IMR-90 (cell line): ENCODE measurements at regions of chr6 and their contacts with region 1.

Region 1: GRCh38 chr6:27479319-27480182 is 6.6 kb upstream of the ZNF184 start:
- DNase-seq: peak; percentile 96
- ATAC-seq: peak; percentile 78
- H3K4me3 ChIP-seq: peak overlapping the region; percentile 54
- H3K27ac ChIP-seq: peak overlapping the region; percentile 85
- H3K4me1 ChIP-seq: no peaks in the 10 kb centered on the region
- H3K27me3 ChIP-seq: no peaks in the 10 kb centered on the region
- CTCF ChIP-seq: no peak
- POLR2A ChIP-seq: 0 out of 2 replicates have a peak, but pooled peaks have one; percentile 49
- RAD21 ChIP-seq: no peak

Region 2: DNA sequence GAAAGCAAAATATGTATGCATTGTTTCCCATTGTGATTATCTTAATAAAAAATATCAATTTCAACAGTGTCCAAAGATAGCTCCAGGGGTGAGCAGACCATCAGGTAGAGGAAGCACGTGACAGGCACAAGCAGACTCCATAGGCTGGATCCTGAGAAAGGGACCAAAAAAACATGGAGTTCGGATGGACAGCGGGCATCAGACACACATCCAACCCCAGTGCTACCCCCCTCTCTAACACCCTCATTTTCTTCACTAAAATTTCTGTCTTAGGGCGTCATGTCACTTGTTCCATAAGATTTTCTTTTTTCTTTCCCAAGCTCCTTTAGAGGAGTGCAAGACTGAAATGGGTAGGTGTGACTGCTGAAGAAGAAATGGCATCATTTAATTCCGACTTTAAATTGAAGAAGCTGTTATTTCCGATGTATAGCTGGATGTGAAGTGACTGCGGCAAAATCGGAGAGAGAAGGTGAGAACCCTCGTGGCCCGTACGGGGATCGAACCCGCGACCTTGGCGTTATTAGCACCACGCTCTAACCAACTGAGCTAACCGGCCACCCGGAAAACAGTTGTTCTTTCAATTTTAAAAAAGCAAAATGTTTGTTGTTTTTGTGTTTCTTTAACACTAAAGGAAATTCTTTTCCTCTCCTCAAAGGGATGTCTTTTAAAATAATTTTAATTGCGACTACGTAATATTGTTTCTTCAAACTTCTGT is 242.3 kb before region 1 on chr6:
- CTCF ChIA-PET with region 1: no interaction called
- POLR2A ChIA-PET with region 1: no interaction called
- dilution Hi-C with region 1: no loop called
- in situ Hi-C with region 1: no loop called
- intact Hi-C with region 1: loop called (anchors 5 kb)
- DNase-seq: peak; percentile 77
- ATAC-seq: peak; percentile 90
- H3K4me3 ChIP-seq: peak overlapping the region; percentile 60; the same call in 1 of the 2 replicates
- H3K27ac ChIP-seq: no peak overlapping the region
- H3K4me1 ChIP-seq: no peaks in the 10 kb centered on the region
- H3K27me3 ChIP-seq: no peaks in the 10 kb centered on the region
- CTCF ChIP-seq: no peak
- POLR2A ChIP-seq: no peak
- RAD21 ChIP-seq: no peak

Region 3: GRCh38 chr6:27441001-27441400 is 38.5 kb before region 1 on chr6:
- CTCF ChIA-PET with region 1: no interaction called
- POLR2A ChIA-PET with region 1: no interaction called
- dilution Hi-C with region 1: no loop called
- in situ Hi-C with region 1: no loop called
- intact Hi-C with region 1: no loop called
- DNase-seq: peak; percentile 1
- ATAC-seq: no peak
- H3K4me3 ChIP-seq: no peak overlapping the region
- H3K27ac ChIP-seq: no peak overlapping the region
- H3K4me1 ChIP-seq: no peaks in the 10 kb centered on the region
- H3K27me3 ChIP-seq: no peaks in the 10 kb centered on the region
- CTCF ChIP-seq: no peak
- POLR2A ChIP-seq: no peak
- RAD21 ChIP-seq: no peak

Region 4: DNA sequence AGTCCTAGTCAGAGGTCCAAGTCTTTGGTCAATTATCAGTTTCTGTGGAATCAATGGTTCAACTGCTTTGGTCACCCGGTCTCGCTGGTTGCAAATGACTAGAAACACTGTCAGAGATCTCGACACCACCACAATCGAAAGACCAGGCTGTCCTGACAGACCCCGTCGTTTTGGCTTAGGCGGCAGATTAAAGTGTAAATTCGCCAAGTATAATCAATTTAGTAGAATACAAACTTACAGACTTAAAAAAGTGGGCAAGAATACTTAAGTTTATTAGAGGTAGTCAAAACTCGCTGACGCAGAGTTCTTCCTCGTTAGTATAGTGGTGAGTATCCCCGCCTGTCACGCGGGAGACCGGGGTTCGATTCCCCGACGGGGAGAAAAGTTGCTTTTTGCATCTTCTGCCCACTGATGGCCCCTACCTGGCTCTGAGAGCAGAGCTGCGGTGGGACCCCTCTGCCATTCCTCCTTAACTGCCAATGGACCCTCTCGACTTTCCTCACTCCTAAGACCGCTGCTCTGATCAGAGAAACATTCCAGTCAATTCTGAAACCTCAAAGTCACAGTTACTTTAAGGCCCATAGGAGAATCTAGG is 24.0 kb after region 1 on chr6:
- CTCF ChIA-PET with region 1: interaction called, 3 read pairs
- POLR2A ChIA-PET with region 1: no interaction called
- dilution Hi-C with region 1: no loop called
- in situ Hi-C with region 1: no loop called
- intact Hi-C with region 1: loop called (anchors 2 kb)
- DNase-seq: peak; percentile 78
- ATAC-seq: peak; percentile 53
- H3K4me3 ChIP-seq: peak overlapping the region; percentile 74
- H3K27ac ChIP-seq: no peak overlapping the region
- H3K4me1 ChIP-seq: no peaks in the 10 kb centered on the region
- H3K27me3 ChIP-seq: no peaks in the 10 kb centered on the region
- CTCF ChIP-seq: no peak
- POLR2A ChIP-seq: no peak
- RAD21 ChIP-seq: no peak; the same call in 1 of the 2 replicates

Region 5: GRCh38 chr6:27902335-27903314 is 423.1 kb after region 1 on chr6:
- CTCF ChIA-PET with region 1: no interaction called
- POLR2A ChIA-PET with region 1: no interaction called
- dilution Hi-C with region 1: no loop called
- in situ Hi-C with region 1: loop called (anchors 10 kb)
- intact Hi-C with region 1: loop called (anchors 5 kb)
- DNase-seq: peak; percentile 78
- ATAC-seq: peak; percentile 94
- H3K4me3 ChIP-seq: peak overlapping the region; percentile 66
- H3K27ac ChIP-seq: no peak overlapping the region
- H3K4me1 ChIP-seq: no peaks in the 10 kb centered on the region
- H3K27me3 ChIP-seq: no peaks in the 10 kb centered on the region
- CTCF ChIP-seq: no peak
- POLR2A ChIP-seq: no peak
- RAD21 ChIP-seq: no peak